ENCODE measurements at regions of chr1 and their contacts with region 1.

Region 1: DNA sequence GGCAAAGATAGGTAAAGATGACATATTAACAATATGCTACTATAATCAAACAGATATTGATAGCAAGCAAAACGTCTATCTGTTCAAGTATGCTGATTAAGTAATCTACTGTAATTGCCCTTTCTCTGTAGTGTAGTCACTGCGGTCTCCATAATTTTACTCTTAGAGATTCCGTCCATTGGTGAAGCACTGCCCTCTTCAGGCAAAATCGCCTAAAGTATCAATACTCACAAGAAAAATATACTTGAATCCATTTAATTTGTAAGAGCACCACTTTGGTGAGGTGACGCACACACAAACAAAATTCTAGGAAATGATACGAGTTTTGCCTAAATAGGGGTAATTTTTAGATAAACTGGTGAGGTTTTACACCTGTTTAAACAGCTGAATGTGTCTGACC is 434.6 kb upstream of the CHRM3 start:
- DNase-seq: peak; percentile 52
- H3K4me3 ChIP-seq: no peak overlapping the region
- H3K27ac ChIP-seq: no peak overlapping the region
- H3K4me1 ChIP-seq: no peaks in the 10 kb centered on the region
- H3K27me3 ChIP-seq: no peaks in the 10 kb centered on the region
- CTCF ChIP-seq: peak; percentile 36 to 64

Region 2: GRCh38 chr1:237851210-237851845 is 1100.5 kb before region 1 on chr1:
- CTCF ChIA-PET with region 1: no interaction called
- dilution Hi-C with region 1: no loop called
- in situ Hi-C with region 1: no loop called
- intact Hi-C with region 1: loop called (anchors 1 kb)
- DNase-seq: peak; percentile 41
- H3K4me3 ChIP-seq: no peak overlapping the region
- H3K27ac ChIP-seq: no peak overlapping the region
- H3K4me1 ChIP-seq: no peaks in the 10 kb centered on the region
- H3K27me3 ChIP-seq: no peaks in the 10 kb centered on the region
- CTCF ChIP-seq: peak; percentile 87 to 92

Region 3: DNA sequence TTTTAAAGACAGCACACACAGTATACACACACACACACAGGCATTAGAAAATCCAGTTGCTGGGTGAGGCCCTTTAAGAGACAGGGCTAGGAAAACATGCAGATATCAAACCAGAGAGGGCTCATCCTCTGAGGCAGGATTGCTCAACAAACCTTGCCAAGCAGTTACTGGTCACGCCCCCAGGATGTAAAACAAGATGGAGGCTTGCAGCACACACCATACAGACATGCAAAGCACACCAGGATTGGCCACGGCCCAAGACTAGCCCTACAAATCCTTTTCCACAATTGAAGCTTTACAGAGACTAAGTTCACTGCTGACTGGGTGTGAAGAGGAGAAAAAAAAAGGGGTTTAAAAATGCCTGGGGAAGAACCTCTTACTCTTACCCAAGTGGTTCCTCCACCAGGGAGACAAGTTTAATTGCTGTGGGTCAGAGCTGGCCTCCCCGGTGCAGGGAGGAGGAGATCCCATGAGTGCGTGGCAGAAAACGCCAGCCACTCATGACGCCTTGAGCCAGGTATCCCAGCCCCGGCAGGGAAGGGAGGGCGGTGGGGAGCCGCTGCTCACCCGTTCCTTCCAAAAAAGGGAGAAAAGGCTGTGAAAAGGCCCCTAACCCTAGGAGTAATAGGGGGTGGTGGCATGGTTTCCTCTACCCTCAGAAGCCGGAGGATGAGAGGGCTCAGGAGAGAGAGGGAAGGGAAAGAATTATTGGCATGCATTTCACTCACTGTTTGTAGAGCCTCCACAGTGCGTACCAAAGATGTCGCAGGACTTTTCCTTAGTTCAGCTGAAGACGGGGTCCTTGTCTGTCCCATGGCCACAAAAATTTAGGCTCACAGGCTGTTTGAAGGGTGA is 466.5 kb before region 1 on chr1:
- CTCF ChIA-PET with region 1: no interaction called
- dilution Hi-C with region 1: no loop called
- in situ Hi-C with region 1: no loop called
- intact Hi-C with region 1: loop called (anchors 5 kb)
- DNase-seq: peak; percentile 25
- H3K4me3 ChIP-seq: peak overlapping the region; percentile 45 to 57 (median 50)
- H3K27ac ChIP-seq: peak overlapping the region; percentile 33
- H3K4me1 ChIP-seq: peaks cover 8% of the 10 kb centered on the region
- H3K27me3 ChIP-seq: no peaks in the 10 kb centered on the region
- CTCF ChIP-seq: no peak

Region 4: GRCh38 chr1:238727670-238728069 is 224.1 kb before region 1 on chr1:
- CTCF ChIA-PET with region 1: no interaction called
- dilution Hi-C with region 1: no loop called
- in situ Hi-C with region 1: no loop called
- intact Hi-C with region 1: no loop called
- DNase-seq: no peak
- H3K4me3 ChIP-seq: no peak overlapping the region
- H3K27ac ChIP-seq: no peak overlapping the region
- H3K4me1 ChIP-seq: no peaks in the 10 kb centered on the region
- H3K27me3 ChIP-seq: no peaks in the 10 kb centered on the region
- CTCF ChIP-seq: no peak

Region 5: DNA sequence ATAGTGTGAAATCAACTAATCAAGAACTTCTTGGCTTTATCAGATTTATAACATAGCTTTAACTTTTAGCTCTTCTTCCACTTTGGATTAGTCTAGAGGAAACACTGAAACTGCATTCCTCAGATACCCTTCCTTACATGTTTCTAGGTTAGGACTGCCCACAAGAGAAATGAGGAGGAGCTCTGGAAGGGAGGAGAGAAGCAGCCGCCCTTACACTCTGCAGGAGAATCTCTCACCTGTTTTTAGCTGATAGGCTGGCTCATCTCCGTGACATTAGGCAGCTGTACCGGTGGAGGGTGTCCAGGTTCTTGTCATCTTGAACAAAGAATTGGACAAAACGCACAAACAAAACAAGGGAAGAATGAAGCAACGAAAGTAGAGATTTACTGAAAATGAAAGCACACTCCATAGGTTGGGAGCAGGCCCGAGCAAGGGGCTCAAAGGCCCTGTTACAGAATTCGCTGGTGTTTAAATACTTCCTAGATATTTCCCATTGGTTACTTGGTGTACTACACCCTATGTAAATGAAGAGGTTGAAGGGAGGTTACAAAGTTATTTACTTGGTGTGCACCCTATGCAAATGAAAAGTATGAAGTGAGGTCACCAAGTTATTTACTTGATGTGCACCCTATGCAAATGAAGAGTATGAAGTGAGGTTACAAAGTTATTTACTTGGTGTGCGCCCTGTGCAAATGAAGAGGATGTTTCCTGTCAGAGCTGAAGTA is 90.3 kb before region 1 on chr1:
- CTCF ChIA-PET with region 1: no interaction called
- dilution Hi-C with region 1: no loop called
- in situ Hi-C with region 1: no loop called
- intact Hi-C with region 1: no loop called
- DNase-seq: no peak
- H3K4me3 ChIP-seq: no peak overlapping the region
- H3K27ac ChIP-seq: no peak overlapping the region
- H3K4me1 ChIP-seq: no peaks in the 10 kb centered on the region
- H3K27me3 ChIP-seq: no peaks in the 10 kb centered on the region
- CTCF ChIP-seq: no peak

Region 6: GRCh38 chr1:238892612-238893011 is 59.2 kb before region 1 on chr1:
- CTCF ChIA-PET with region 1: no interaction called
- dilution Hi-C with region 1: no loop called
- in situ Hi-C with region 1: no loop called
- intact Hi-C with region 1: loop called (anchors 2 kb)
- DNase-seq: peak; percentile 96
- H3K4me3 ChIP-seq: no peak overlapping the region
- H3K27ac ChIP-seq: no peak overlapping the region
- H3K4me1 ChIP-seq: peaks cover 30% of the 10 kb centered on the region
- H3K27me3 ChIP-seq: no peaks in the 10 kb centered on the region
- CTCF ChIP-seq: no peak

Region 7: GRCh38 chr1:239091537-239091936 is 139.7 kb after region 1 on chr1:
- CTCF ChIA-PET with region 1: no interaction called
- dilution Hi-C with region 1: no loop called
- in situ Hi-C with region 1: no loop called
- intact Hi-C with region 1: no loop called
- DNase-seq: no peak
- H3K4me3 ChIP-seq: no peak overlapping the region
- H3K27ac ChIP-seq: no peak overlapping the region
- H3K4me1 ChIP-seq: no peaks in the 10 kb centered on the region
- H3K27me3 ChIP-seq: no peaks in the 10 kb centered on the region
- CTCF ChIP-seq: no peak

Region 8: GRCh38 chr1:239443361-239443760 is 491.6 kb after region 1 on chr1:
- CTCF ChIA-PET with region 1: no interaction called
- dilution Hi-C with region 1: no loop called
- in situ Hi-C with region 1: no loop called
- intact Hi-C with region 1: no loop called
- DNase-seq: no peak
- H3K4me3 ChIP-seq: no peak overlapping the region
- H3K27ac ChIP-seq: no peak overlapping the region
- H3K4me1 ChIP-seq: no peaks in the 10 kb centered on the region
- H3K27me3 ChIP-seq: no peaks in the 10 kb centered on the region
- CTCF ChIP-seq: no peak

Measured in mammary epithelial cell (primary cell).